Prostate gland (tissue), 2 donors: ENCODE measurements at regions of chr1 and their contacts with region 1.

Region 1: DNA sequence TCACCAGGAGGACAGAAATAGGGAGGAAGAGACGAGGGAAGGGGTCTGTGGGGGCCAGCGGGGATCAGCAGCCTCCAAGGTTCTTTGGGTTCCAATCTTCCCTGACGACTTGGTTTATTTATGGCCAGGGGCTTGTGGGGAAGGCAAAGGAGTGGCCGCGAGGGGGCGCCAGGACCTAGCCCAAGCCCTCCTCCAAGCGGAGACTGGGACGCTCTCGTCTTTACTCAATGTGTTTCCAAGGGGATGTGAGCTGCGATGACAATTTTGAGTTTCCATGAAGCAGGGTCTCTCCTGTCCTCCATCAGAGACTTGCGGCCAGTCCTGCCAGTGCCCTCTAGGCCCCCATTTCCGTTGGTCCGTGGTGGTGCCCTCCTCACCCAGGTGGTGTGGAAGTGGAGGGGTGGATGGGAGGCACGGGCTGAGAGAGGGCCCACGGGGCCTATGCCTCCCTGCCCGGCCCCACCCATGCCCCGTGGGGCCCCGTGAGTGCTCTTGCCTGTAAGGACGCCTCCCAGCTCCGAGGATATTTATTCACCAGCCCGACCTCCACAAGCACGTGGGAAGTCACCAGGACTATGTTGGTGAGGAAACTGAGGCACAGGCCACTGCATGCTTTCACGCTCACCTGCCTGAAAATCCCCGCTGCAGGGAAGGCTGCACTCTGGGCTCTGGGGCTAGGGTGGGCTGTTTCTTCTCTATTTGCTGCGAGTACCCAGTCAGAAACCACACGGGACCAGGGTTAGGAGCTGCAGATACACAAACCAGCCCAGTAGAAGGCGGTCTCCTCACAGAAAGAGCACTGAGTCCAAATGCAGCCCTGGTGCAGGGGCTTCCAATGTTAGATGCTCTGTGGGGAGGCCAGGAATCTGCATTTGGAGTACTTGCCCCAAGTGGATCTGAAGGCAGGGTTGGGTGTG is 26.5 kb downstream of the DMRTB1 start:
- DNase-seq: peak; percentile 78
- H3K4me3 ChIP-seq: no peak overlapping the region
- H3K27ac ChIP-seq: no peak overlapping the region
- H3K4me1 ChIP-seq: no peaks in the 10 kb centered on the region
- H3K27me3 ChIP-seq: no peaks in the 10 kb centered on the region
- CTCF ChIP-seq: peak; percentile 75 to 90 (median 88)
- POLR2A ChIP-seq: no peak

Region 2: GRCh38 chr1:53541761-53542550 is 56.2 kb after region 1 on chr1:
- intact Hi-C with region 1: no loop called
- DNase-seq: no peak
- H3K4me3 ChIP-seq: no peak overlapping the region
- H3K27ac ChIP-seq: no peak overlapping the region
- H3K4me1 ChIP-seq: no peaks in the 10 kb centered on the region
- H3K27me3 ChIP-seq: no peaks in the 10 kb centered on the region
- CTCF ChIP-seq: peak in 1 of 4 experiments; percentile 23
- POLR2A ChIP-seq: no peak

Region 3: DNA sequence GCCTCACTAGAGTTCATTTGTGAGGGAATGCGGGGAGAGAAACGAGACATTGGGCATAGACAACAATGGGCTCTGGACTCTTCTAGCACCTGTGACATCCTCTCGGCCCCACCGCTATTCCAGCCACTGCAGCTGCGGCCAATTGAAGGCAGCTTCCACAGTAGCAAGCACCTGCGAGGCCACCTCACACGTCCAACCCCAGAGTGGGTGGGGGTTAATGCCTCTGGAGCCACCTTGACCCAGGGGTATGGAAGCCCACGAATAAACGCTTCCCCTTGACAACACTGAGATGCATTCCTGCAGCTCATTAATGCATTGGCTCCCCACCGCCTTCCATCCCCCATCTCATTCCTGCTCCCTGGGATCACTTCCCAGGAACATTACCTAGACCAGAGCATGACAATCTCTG is 148.8 kb after region 1 on chr1:
- intact Hi-C with region 1: loop called (anchors 5 kb)
- DNase-seq: no peak
- H3K4me3 ChIP-seq: no peak overlapping the region
- H3K27ac ChIP-seq: no peak overlapping the region
- H3K4me1 ChIP-seq: no peaks in the 10 kb centered on the region
- H3K27me3 ChIP-seq: no peaks in the 10 kb centered on the region
- CTCF ChIP-seq: no peak
- POLR2A ChIP-seq: no peak

Region 4: DNA sequence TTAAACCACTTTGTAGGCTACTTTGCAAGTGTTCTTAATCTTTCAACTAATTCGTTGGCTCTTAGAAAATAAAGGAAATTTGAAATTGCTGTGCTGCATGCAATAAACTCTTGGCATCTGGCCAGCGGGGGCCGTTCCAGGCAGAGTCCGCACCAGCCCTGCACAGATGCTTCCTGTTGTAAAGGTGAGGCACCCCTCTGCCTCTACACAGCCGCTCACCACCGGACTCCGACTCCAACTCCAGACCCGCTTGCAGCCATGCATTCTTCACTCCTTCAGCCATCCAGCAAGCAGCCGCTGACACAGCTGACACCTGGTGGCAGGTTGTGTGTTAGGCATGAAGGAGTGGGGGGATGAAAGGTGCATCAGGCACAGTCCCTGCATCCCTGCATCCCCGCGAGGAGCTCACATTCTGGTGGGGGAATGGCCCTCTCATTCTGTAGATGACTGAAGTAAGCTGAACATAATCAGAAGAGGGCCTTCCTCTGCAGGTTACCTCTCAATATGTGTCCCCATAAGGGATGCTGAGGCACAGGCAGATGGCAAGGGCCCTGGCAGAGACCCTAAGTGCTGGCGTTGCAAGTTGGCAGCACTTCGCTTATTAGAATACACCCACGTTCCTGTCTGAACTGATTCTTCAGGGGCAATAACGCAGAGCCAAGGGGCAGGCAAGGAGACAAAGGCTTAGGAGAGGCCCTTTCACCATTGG is 196.4 kb after region 1 on chr1:
- intact Hi-C with region 1: loop called (anchors 5 kb)
- DNase-seq: peak; percentile 43
- H3K4me3 ChIP-seq: no peak overlapping the region
- H3K27ac ChIP-seq: no peak overlapping the region
- H3K4me1 ChIP-seq: no peaks in the 10 kb centered on the region
- H3K27me3 ChIP-seq: peaks cover 4% of the 10 kb centered on the region
- CTCF ChIP-seq: peak in 3 of 4 experiments; percentile 50 to 70 (median 65)
- POLR2A ChIP-seq: no peak

Region 5: DNA sequence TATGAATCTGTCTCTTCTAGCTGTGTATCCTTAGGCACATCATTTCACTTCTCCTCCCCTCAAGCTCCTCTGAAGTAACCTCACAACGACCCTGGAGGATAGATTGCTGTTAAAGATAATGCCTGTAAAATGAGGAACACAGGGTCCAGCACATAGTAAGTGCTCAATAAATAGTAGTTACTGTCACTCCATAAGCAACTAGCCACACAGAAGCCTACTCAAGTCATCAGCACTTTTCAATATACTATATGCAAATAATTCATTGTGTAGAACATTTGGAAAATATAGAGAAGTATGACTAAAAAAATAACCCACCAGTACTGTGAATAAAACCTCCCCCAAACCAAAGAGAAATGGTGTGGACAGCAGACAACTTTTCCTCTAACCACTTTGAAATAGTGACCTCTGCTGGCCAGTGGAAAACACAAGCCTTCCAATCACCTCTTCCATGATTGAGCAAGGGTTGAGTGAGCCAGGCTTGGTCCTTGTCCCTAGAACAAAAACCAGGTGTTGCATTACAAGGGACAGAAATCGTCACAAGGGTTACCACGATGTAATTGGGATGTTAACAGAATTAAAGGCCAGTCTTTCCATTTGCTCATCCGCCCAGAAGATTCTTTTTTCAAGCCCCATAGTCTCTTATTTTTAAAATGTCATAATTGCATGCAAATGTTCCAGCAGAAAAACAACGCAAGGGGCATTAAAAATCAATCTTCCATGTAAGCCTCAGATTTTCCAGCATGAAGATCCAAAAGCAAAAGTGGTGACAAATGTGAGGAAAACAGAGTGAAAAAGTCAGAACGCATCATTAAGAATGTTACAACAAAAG is 269.0 kb after region 1 on chr1:
- intact Hi-C with region 1: loop called (anchors 2 kb)
- DNase-seq: peak; percentile 30
- H3K4me3 ChIP-seq: no peak overlapping the region
- H3K27ac ChIP-seq: no peak overlapping the region
- H3K4me1 ChIP-seq: no peaks in the 10 kb centered on the region
- H3K27me3 ChIP-seq: no peaks in the 10 kb centered on the region
- CTCF ChIP-seq: peak in 3 of 4 experiments; percentile 48 to 63 (median 54)
- POLR2A ChIP-seq: no peak

Region 6: DNA sequence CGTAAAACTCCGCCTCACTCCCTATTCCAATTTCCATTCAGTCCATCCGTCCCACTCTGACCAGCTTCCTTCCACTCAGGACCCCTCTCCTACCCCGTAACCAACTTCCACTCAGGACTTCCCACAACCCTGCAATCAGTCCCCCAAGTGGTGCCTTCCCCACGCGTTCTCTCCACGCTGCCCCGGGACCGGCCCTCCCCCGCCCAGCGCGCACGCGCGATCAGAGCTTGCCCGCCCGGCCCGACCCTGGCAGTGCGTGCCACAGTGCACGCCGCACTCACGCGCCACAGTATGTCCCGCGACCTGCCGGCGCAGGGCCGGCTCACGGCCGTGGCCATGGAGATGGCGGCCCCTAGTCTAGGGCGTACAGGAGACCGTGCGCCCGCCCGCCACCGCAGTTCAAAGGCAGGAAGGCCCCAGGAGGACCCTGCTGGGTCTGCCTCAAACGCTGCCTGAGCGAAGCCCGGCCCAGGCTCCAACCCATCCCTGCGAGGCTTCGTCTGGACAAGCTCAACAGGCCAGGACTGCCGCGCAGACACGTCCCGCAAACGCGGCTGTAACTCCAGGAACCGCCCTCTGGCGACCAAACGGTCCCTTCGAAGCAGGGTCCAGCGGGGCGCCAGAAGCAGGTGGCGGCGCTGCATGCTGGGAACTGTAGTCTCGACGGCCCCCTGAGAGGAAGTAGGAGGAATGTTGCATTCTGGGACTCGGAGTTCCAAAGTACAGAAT is 352.4 kb after region 1 on chr1 and contains the start of gene NDC1:
- intact Hi-C with region 1: loop called (anchors 10 kb)
- DNase-seq: peak; percentile 94
- H3K4me3 ChIP-seq: peak within 1 kb of the TSS; percentile 83 to 84
- H3K27ac ChIP-seq: peak within 1 kb of the TSS; percentile 89 to 91
- H3K4me1 ChIP-seq: no peaks in the 10 kb centered on the region
- H3K27me3 ChIP-seq: no peaks in the 10 kb centered on the region
- CTCF ChIP-seq: peak in 2 of 4 experiments; percentile 39 to 46
- POLR2A ChIP-seq: peak; percentile 26
- total RNA-seq, gene NDC1: 15.3 to 20.6 TPM